CD8-positive, alpha-beta T cell (primary cell): ENCODE measurements at regions of chr9 and their contacts with region 1.

Region 1: DNA sequence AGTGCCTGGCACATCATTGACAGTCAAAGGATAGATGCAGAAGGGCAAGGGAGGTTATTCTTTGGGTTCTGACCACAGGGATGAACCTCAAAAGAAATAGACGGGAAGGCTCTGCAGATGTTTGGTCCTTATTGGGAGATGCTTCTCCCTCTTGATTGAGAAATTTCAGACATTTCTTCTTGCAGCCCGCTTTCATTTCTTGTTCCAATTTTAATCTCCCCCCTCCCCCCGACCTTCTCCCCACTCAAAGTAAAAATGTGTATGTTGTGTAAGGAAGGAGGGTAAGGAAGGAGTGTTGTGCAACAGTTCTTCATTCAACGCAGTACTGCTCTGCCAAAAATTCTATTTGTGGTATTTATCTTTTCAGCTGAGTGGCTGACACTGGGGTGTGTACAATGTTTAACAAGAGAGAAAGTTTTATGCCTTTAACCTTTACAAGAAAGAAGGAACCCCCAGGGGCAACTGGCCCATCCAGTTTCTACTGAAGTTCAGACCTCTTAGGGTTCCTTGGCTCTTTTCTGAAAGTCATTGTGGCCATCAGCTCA is 46.3 kb upstream of the TNFSF15 start:
- DNase-seq: no peak
- ATAC-seq: no peak
- H3K4me3 ChIP-seq: no peak overlapping the region
- H3K4me3 Mint-ChIP-seq: no peak overlapping the region
- H3K27ac ChIP-seq: no peak overlapping the region
- H3K27ac Mint-ChIP-seq: no peak overlapping the region
- H3K4me1 ChIP-seq: no peaks in the 10 kb centered on the region
- H3K4me1 Mint-ChIP-seq: peaks cover 3% of the 10 kb centered on the region
- H3K27me3 ChIP-seq: no peaks in the 10 kb centered on the region
- H3K27me3 Mint-ChIP-seq: no peaks in the 10 kb centered on the region
- CTCF ChIP-seq: no peak

Region 2: DNA sequence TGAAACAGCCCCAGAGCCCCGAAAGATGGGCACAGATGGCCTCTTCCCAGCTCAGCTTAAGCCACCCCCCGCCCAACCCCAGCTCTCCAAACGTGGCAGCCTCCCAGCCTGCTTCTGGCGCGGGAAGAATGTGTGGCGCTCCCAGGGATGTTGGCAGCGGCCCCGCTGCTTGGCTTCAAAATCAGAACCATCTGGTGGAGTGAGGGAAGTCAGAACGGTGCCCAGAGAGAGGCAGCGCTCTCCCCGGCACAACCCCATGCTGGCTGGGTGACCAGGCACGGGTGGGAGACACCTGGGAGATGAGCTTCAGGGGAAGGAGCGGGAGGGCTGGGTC is 601.9 kb before region 1 on chr9:
- CTCF ChIA-PET with region 1: no interaction called
- POLR2A ChIA-PET with region 1: no interaction called
- intact Hi-C with region 1: no loop called
- DNase-seq: no peak
- ATAC-seq: no peak
- H3K4me3 ChIP-seq: no peak overlapping the region
- H3K4me3 Mint-ChIP-seq: no peak overlapping the region
- H3K27ac ChIP-seq: no peak overlapping the region
- H3K27ac Mint-ChIP-seq: no peak overlapping the region
- H3K4me1 ChIP-seq: no peaks in the 10 kb centered on the region
- H3K4me1 Mint-ChIP-seq: no peaks in the 10 kb centered on the region
- H3K27me3 ChIP-seq: no peaks in the 10 kb centered on the region
- H3K27me3 Mint-ChIP-seq: no peaks in the 10 kb centered on the region
- CTCF ChIP-seq: no peak

Region 3: GRCh38 chr9:114574438-114574837 is 277.7 kb before region 1 on chr9:
- CTCF ChIA-PET with region 1: no interaction called
- POLR2A ChIA-PET with region 1: no interaction called
- intact Hi-C with region 1: no loop called
- DNase-seq: no peak
- ATAC-seq: no peak
- H3K4me3 ChIP-seq: no peak overlapping the region
- H3K4me3 Mint-ChIP-seq: no peak overlapping the region
- H3K27ac ChIP-seq: no peak overlapping the region
- H3K27ac Mint-ChIP-seq: no peak overlapping the region
- H3K4me1 ChIP-seq: no peaks in the 10 kb centered on the region
- H3K4me1 Mint-ChIP-seq: no peaks in the 10 kb centered on the region
- H3K27me3 ChIP-seq: no peaks in the 10 kb centered on the region
- H3K27me3 Mint-ChIP-seq: no peaks in the 10 kb centered on the region
- CTCF ChIP-seq: no peak

Region 4: DNA sequence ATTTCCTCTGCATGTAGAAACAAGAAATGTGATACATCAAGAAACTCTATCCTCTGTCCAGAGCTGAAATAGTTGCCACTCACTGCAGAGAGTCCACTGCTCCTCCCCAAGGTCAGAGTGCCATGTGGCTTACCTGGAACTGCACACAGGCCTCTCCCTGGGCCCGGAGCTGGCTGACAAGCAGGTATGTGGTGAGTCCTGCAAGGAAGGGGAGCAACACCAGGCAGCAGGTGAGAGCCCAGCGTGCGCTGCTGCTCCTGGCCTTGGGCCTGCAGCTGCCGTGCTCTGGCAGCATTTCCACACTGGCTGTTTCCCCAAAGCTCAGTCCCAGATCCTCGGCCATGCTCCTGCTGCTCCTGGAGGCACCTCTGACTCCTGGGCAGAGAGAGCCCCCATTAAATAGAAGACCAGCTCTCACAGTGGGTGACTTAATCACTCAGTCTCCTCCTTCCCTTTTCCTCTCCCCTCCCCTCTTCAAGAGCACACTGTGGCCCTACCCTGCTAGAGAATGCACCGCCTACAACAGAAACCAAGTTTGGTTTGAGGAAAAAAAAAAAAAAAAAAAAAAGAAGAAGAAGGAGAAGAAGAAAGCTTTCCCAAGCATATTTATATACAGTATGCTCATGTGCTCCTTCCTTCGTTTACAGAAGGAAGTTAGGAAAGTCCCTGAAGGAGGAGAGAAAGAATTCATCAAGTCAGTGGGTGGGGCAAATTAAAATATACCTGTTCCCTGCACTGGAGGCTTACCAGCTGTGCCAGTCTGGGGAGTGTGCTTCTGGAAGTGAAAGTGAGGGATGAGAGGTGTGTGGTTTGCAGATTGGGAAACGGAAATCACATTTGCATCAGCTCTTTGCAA is 46.2 kb before region 1 on chr9 and contains the start of gene TNFSF15:
- CTCF ChIA-PET with region 1: no interaction called
- POLR2A ChIA-PET with region 1: no interaction called
- intact Hi-C with region 1: no loop called
- DNase-seq: peak in 2 of 9 experiments; percentile 6 to 32
- ATAC-seq: no peak
- H3K4me3 ChIP-seq: no peak within 1 kb of the TSS
- H3K4me3 Mint-ChIP-seq: peak within 1 kb of the TSS; percentile 3
- H3K27ac ChIP-seq: no peak within 1 kb of the TSS
- H3K27ac Mint-ChIP-seq: no peak within 1 kb of the TSS
- H3K4me1 ChIP-seq: peaks cover 17% of the 10 kb centered on the region
- H3K4me1 Mint-ChIP-seq: peaks cover 22% of the 10 kb centered on the region
- H3K27me3 ChIP-seq: no peaks in the 10 kb centered on the region
- H3K27me3 Mint-ChIP-seq: no peaks in the 10 kb centered on the region
- CTCF ChIP-seq: no peak
- total RNA-seq, gene TNFSF15: not detected

Region 5: DNA sequence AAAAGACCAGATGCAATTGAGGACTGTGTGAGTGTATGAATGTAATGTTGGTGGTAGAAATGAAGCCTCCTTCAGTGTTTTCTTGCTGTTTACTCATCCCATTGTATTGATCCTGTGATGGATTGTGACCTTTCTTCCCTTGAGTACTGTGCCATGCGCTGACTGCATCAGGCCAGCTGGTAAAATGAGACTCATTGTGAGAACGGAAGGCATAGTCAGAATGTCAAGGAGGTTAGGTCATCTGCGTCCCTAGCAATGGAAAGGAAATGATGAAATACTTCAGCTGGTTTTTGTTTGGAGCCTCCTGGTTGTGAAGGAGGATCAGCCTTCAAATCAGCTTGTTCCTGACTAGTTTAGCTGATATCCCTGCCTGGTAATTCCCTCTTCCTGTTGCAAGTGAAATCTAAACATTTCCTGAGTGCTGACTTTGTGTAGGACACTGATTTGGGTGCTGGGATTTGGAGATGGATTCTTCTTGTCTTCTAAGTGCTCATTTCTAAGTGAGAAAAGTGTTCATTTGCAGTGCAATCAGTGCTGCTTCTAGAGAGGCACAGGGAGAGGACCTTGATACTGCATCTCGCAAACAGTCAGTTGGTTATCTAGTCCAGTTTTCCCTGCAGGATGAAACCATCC is 42.8 kb after region 1 on chr9:
- CTCF ChIA-PET with region 1: no interaction called
- POLR2A ChIA-PET with region 1: no interaction called
- intact Hi-C with region 1: loop called in 1 of 2 experiments (anchors 5 kb)
- DNase-seq: no peak
- ATAC-seq: no peak
- H3K4me3 ChIP-seq: no peak overlapping the region
- H3K4me3 Mint-ChIP-seq: peak overlapping the region; percentile 26
- H3K27ac ChIP-seq: peak overlapping the region in 1 of 2 experiments; percentile 1
- H3K27ac Mint-ChIP-seq: peak overlapping the region; percentile 37
- H3K4me1 ChIP-seq: peaks cover 64% of the 10 kb centered on the region
- H3K4me1 Mint-ChIP-seq: peaks cover 49% of the 10 kb centered on the region
- H3K27me3 ChIP-seq: no peaks in the 10 kb centered on the region
- H3K27me3 Mint-ChIP-seq: no peaks in the 10 kb centered on the region
- CTCF ChIP-seq: no peak